PC-9 (cell line): ENCODE measurements at regions of chr4 and their contacts with region 1.

Region 1: GRCh38 chr4:133982533-133983224 is 218.9 kb downstream of the PABPC4L start:
- DNase-seq: no peak
- H3K4me3 ChIP-seq: no peak overlapping the region
- H3K27ac ChIP-seq: no peak overlapping the region
- H3K4me1 ChIP-seq: no peaks in the 10 kb centered on the region
- H3K27me3 ChIP-seq: no peaks in the 10 kb centered on the region
- CTCF ChIP-seq: no peak

Region 2: GRCh38 chr4:133741766-133742165 is 240.9 kb before region 1 on chr4:
- CTCF ChIA-PET with region 1: no interaction called
- POLR2A ChIA-PET with region 1: no interaction called
- intact Hi-C with region 1: no loop called
- DNase-seq: no peak
- H3K4me3 ChIP-seq: no peak overlapping the region
- H3K27ac ChIP-seq: no peak overlapping the region
- H3K4me1 ChIP-seq: no peaks in the 10 kb centered on the region
- H3K27me3 ChIP-seq: no peaks in the 10 kb centered on the region
- CTCF ChIP-seq: no peak

Region 3: GRCh38 chr4:133921280-133922195 is 61.1 kb before region 1 on chr4:
- CTCF ChIA-PET with region 1: no interaction called
- POLR2A ChIA-PET with region 1: no interaction called
- intact Hi-C with region 1: loop called (anchors 10 kb)
- DNase-seq: no peak
- H3K4me3 ChIP-seq: no peak overlapping the region
- H3K27ac ChIP-seq: no peak overlapping the region
- H3K4me1 ChIP-seq: no peaks in the 10 kb centered on the region
- H3K27me3 ChIP-seq: no peaks in the 10 kb centered on the region
- CTCF ChIP-seq: no peak